ENCODE measurements at regions of chr22 and their contacts with region 1.

Region 1: DNA sequence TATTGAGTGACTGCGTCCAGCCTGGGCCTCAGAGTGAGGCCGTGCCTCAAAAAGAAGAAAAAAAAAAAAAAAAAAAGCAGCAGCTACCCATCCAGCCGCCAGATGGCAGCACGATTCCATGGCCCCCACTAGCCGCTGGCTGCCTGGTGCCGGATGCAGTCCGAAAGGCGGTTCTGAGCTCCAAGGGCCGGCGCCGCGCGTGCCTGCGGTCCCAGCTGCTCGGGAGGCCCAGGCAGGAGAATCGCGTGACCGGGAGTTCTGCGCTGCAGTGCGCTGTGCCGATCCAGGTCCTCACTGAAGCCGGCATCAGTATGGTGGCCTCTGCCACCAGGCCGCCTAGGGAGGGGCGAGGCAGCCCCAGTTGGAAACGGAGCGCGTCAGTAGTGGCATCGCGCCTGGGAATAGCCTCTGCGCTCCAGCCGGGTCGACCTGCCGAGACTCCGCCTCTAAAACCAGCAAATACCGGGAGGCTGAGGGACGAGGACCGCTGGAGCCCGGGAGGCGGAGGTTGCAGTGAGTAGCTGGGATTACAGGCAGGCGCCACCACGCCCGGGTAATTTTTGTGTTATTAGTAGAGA is 19.3 kb downstream of the SCARF2 start:
- DNase-seq: peak; percentile 64 to 83 (median 67)
- H3K4me3 ChIP-seq: peak overlapping the region; percentile 56
- H3K4me3 Mint-ChIP-seq: peak overlapping the region in 6 of 7 donors; percentile 60 to 83 (median 74)
- H3K27ac ChIP-seq: no peak overlapping the region
- H3K27ac Mint-ChIP-seq: peak overlapping the region in 1 of 8 donors; percentile 43
- H3K4me1 ChIP-seq: peaks cover 11% of the 10 kb centered on the region
- H3K4me1 Mint-ChIP-seq: peaks cover 5 to 6% (median 5%) of the 10 kb centered on the region in 3 donors
- H3K27me3 ChIP-seq: peaks cover 3% of the 10 kb centered on the region
- H3K27me3 Mint-ChIP-seq: no peaks in the 10 kb centered on the region

Region 2: DNA sequence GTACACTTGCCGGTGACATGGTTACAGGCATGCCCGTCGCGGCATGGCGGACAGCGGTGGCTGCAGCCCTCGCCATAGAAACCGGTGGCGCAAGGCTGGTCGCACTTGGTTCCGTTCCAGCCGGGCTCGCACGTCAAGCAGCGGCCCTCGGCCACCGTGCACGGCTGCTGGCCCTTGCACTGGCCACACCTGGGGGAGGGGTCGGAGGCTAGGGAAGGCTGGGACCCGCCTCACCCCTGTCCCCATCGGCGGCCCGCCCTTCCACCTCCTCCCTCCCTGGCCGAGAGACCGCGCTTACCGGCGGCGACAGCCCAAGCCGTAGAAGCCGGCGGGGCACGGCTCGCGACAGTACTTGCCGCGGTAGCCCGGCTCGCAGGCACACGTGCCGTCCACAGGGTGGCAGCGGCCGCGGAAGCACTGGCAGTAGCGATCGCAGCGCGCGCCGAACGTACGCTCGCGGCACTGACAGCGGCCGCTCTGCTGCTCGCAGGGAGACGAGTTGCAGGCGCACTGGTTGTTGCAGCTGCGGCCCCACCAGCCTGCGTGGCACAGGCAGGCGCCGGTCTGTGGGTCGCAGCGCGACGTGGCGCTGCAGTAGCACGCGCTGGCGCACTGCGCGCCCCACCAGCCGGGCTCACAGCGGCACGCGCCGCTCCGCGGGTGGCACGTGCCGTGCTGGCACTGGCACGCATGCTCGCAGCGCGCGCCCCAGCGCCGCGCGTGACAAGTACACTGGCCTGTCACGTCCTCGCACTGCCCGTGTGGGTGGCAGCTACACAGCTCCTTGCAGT is 12.6 kb after region 1 on chr22:
- CTCF ChIA-PET with region 1: interaction called, 38 read pairs
- POLR2A ChIA-PET with region 1: no interaction called
- DNase-seq: peak; percentile 35 to 73 (median 47)
- H3K4me3 ChIP-seq: peak overlapping the region; percentile 82
- H3K4me3 Mint-ChIP-seq: peak overlapping the region; percentile 77 to 92 (median 86)
- H3K27ac ChIP-seq: no peak overlapping the region
- H3K27ac Mint-ChIP-seq: no peak overlapping the region
- H3K4me1 ChIP-seq: peaks cover 28% of the 10 kb centered on the region
- H3K4me1 Mint-ChIP-seq: peaks cover 11 to 54% (median 14%) of the 10 kb centered on the region in 3 donors
- H3K27me3 ChIP-seq: peaks cover 29% of the 10 kb centered on the region
- H3K27me3 Mint-ChIP-seq: peaks cover 24 to 37% of the 10 kb centered on the region in 2 donors

Region 3: DNA sequence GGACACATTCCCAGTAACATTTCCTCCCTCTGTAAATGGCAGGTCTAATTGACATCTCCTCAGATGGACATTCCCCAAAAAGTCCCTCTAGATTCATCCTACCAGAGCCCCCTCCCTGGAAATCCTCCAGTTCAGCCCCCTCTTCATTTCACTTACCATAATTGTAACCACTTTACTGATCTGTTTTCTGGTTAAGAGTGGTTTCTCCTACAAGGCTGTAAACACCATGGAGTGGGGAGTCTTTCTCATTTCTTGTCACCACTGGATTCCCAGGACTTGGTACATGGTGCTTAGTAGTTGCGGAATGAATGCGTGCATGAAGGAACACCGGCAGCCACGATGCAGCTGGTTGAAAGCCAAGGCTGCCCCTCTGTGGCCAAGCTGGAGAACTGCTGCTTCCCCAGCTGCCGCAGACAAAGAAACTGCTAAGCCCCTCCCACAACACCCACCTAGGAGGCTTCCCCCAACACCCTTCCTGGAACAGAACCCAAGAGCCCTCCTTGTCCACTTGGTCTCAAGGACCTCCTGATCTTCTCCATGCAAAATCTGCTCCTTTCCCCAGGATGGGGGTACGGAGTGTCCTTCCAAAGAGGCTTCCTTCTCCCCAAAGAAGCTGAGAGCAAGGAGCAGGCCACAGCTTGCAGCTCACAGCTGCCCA is 37.9 kb after region 1 on chr22:
- CTCF ChIA-PET with region 1: interaction called, 41 read pairs
- POLR2A ChIA-PET with region 1: no interaction called
- DNase-seq: peak; percentile 57 to 82 (median 74)
- H3K4me3 ChIP-seq: no peak overlapping the region
- H3K4me3 Mint-ChIP-seq: no peak overlapping the region
- H3K27ac ChIP-seq: no peak overlapping the region
- H3K27ac Mint-ChIP-seq: peak overlapping the region in 5 of 8 donors; percentile 14 to 73 (median 42)
- H3K4me1 ChIP-seq: peaks cover 14% of the 10 kb centered on the region
- H3K4me1 Mint-ChIP-seq: peaks cover 23 to 34% (median 24%) of the 10 kb centered on the region in 3 donors
- H3K27me3 ChIP-seq: no peaks in the 10 kb centered on the region
- H3K27me3 Mint-ChIP-seq: no peaks in the 10 kb centered on the region

Region 4: DNA sequence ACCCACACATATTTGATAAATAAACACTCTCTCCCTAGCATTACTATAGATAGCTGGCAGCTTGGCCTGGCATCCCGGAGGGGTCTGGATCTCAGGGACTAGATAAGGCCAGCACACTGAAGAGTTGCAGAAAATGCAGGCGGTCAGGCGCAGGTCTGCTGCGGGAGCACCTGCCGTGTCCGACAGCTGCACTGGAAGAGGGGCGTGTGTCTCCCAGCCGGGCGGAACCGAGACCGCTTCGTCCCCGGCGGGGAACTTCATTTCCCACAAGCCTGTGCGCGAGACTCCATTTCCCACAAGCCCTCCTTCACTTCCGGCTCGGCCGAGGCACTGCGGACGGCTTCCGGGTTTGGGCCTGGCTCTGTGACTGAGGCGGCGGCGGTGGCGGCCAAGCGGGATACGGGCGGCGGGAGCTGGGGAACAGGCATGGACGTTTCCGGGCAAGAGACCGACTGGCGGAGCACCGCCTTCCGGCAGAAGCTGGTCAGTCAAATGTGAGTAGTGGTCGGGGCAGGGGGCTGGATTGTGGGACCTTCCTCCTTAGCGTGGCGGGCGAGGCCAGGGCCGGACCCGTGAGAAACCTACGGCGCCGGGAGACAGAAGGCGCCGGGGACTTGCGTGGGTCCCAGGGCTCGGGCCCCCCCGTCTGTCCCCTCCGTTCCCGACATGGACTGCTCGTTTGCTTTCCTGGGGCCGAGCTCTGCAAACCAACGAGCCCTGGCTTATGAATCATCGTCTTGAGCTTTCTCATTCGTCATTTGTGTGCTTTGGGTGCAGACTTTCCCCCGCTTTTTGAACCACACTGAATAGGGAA is 89.2 kb after region 1 on chr22 and contains the start of gene MED15:
- CTCF ChIA-PET with region 1: no interaction called
- POLR2A ChIA-PET with region 1: no interaction called
- DNase-seq: peak; percentile 81 to 92 (median 82)
- H3K4me3 ChIP-seq: peak within 1 kb of the TSS; percentile 98
- H3K4me3 Mint-ChIP-seq: peak within 1 kb of the TSS; percentile 94 to 100 (median 97)
- H3K27ac ChIP-seq: peak within 1 kb of the TSS; percentile 99
- H3K27ac Mint-ChIP-seq: peak within 1 kb of the TSS; percentile 73 to 99 (median 97)
- H3K4me1 ChIP-seq: peaks cover 44% of the 10 kb centered on the region
- H3K4me1 Mint-ChIP-seq: peaks cover 48 to 56% (median 52%) of the 10 kb centered on the region in 3 donors
- H3K27me3 ChIP-seq: no peaks in the 10 kb centered on the region
- H3K27me3 Mint-ChIP-seq: peaks cover 0 to 1% of the 10 kb centered on the region in 2 donors
- total RNA-seq, gene MED15: 98.0 to 106 TPM

Region 5: GRCh38 chr22:20741634-20742581 is 323.6 kb after region 1 on chr22:
- CTCF ChIA-PET with region 1: interaction called, 14 read pairs
- POLR2A ChIA-PET with region 1: interaction called, 4 read pairs
- DNase-seq: peak in 3 of 5 donors; percentile 22 to 50 (median 31)
- H3K4me3 ChIP-seq: no peak overlapping the region
- H3K4me3 Mint-ChIP-seq: no peak overlapping the region
- H3K27ac ChIP-seq: no peak overlapping the region
- H3K27ac Mint-ChIP-seq: peak overlapping the region in 1 of 8 donors; percentile 21
- H3K4me1 ChIP-seq: no peaks in the 10 kb centered on the region
- H3K4me1 Mint-ChIP-seq: no peaks in the 10 kb centered on the region
- H3K27me3 ChIP-seq: no peaks in the 10 kb centered on the region
- H3K27me3 Mint-ChIP-seq: no peaks in the 10 kb centered on the region